H1 (cell line): ENCODE measurements at regions of chr2 and their contacts with region 1.

Region 1: DNA sequence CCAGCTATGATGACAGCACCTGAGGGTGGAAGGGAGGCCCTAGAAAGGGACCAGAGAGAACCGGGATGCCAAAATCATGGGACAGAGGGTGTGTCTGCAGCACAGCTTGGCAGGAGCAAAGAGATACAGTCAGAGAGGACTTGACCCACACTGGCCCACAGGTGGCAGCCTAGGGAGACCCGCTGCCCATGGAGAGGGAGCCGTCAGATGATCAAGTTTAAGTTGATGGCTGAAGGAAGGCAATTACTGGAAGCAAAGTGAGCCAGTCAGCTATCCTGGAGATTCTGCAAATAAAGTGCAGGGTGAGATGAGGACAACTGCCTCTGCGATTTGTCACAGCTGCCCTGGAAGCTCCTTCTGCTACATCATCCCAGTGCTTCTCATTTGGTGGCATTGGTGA is 74.0 kb downstream of the CMPK2 start:
- DNase-seq: no peak
- H3K4me3 ChIP-seq: no peak overlapping the region
- H3K27ac ChIP-seq: no peak overlapping the region
- H3K4me1 ChIP-seq: no peaks in the 10 kb centered on the region
- H3K27me3 ChIP-seq: no peaks in the 10 kb centered on the region
- CTCF ChIP-seq: peak; percentile 62 to 80 (median 70)
- EP300 ChIP-seq: no peak
- POLR2A ChIP-seq: no peak
- RAD21 ChIP-seq: peak; percentile 48 to 59

Region 2: GRCh38 chr2:6812857-6813530 is 21.3 kb after region 1 on chr2:
- CTCF ChIA-PET with region 1: interaction called, 23 read pairs
- POLR2A ChIA-PET with region 1: no interaction called
- DNase-seq: no peak
- H3K4me3 ChIP-seq: no peak overlapping the region
- H3K27ac ChIP-seq: no peak overlapping the region
- H3K4me1 ChIP-seq: peaks cover 0 to 8% (median 3%) of the 10 kb centered on the region in 4 experiments; a peak in 4 of 7 replicates
- H3K27me3 ChIP-seq: peaks cover 0 to 6% (median 2%) of the 10 kb centered on the region in 4 experiments; a peak in 3 of 7 replicates
- CTCF ChIP-seq: no peak
- EP300 ChIP-seq: no peak
- POLR2A ChIP-seq: no peak
- RAD21 ChIP-seq: no peak

Region 3: DNA sequence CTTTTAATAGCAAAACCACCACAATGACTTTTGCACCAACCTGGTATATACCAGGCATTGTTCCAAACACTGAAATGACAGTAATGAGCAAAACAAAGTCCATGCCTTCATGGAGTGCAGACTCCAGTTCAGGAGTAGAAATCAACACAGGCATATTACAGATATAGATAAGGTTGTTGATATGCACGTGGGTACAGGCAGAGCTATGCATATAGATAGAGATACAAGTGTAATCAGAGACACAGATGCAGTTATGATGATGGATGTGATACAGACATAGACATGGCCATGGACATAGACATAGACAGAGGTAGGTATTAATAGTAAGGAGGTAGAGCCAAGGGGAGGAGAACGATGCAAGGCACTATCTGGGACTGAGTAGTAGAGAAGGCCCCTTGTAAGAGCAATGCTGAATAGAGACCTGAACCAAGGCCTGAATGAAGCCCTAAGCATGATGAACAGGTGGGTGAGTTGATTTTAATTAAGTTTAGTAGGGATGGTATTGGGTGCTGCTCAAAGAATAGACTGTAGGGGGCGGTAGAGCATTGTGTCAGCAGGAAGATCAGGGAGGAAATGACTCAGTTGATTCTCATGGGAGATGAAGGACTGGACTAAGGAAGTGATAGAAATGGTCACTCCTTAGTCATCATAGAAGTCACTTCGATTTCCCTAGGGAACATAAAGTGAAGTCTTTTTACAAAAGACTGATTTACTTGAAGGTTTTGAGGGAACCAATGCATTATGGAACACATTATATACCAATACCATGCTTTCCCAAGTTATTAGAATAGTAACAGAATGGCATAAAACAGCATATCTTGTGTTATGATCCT is 34.6 kb after region 1 on chr2:
- CTCF ChIA-PET with region 1: interaction called, 10 read pairs
- POLR2A ChIA-PET with region 1: no interaction called
- DNase-seq: peak in 1 of 2 experiments; percentile 76
- H3K4me3 ChIP-seq: no peak overlapping the region
- H3K27ac ChIP-seq: no peak overlapping the region
- H3K4me1 ChIP-seq: no peaks in the 10 kb centered on the region; a peak in 3 of 7 replicates
- H3K27me3 ChIP-seq: no peaks in the 10 kb centered on the region; a peak in 1 of 7 replicates
- CTCF ChIP-seq: peak in 2 of 3 experiments; percentile 63 to 81; a peak in 3 of 4 replicates
- EP300 ChIP-seq: no peak
- POLR2A ChIP-seq: no peak
- RAD21 ChIP-seq: peak; percentile 72 to 78